Activated CD4-positive, alpha-beta memory T cell treated with anti-CD3 and anti-CD28 coated beads for 36 hours (primary cell): ENCODE measurements at regions of chr7 and their contacts with region 1.

Region 1: GRCh38 chr7:143008007-143008901 is 18.7 kb downstream of the OR9A2 start:
- DNase-seq: peak; percentile 88
- H3K4me3 Mint-ChIP-seq: no peak overlapping the region
- H3K27ac Mint-ChIP-seq: no peak overlapping the region
- H3K4me1 Mint-ChIP-seq: peaks cover 5% of the 10 kb centered on the region
- H3K27me3 Mint-ChIP-seq: peaks cover 5% of the 10 kb centered on the region

Region 2: GRCh38 chr7:142301923-142302550 is 706.2 kb before region 1 on chr7:
- CTCF ChIA-PET with region 1: interaction called, 14 read pairs
- POLR2A ChIA-PET with region 1: no interaction called
- intact Hi-C with region 1: loop called (anchors 5 kb)
- DNase-seq: no peak
- H3K4me3 Mint-ChIP-seq: no peak overlapping the region
- H3K27ac Mint-ChIP-seq: no peak overlapping the region
- H3K4me1 Mint-ChIP-seq: peaks cover 20% of the 10 kb centered on the region
- H3K27me3 Mint-ChIP-seq: peaks cover 10% of the 10 kb centered on the region

Region 3: GRCh38 chr7:142535123-142535779 is 473.0 kb before region 1 on chr7:
- CTCF ChIA-PET with region 1: interaction called, 32 read pairs
- POLR2A ChIA-PET with region 1: no interaction called
- intact Hi-C with region 1: loop called (anchors 1 kb)
- DNase-seq: peak; percentile 89
- H3K4me3 Mint-ChIP-seq: peak overlapping the region; percentile 67
- H3K27ac Mint-ChIP-seq: peak overlapping the region; percentile 86
- H3K4me1 Mint-ChIP-seq: peaks cover 32% of the 10 kb centered on the region
- H3K27me3 Mint-ChIP-seq: peaks cover 3% of the 10 kb centered on the region

Region 4: GRCh38 chr7:142873281-142873787 is 134.9 kb before region 1 on chr7:
- CTCF ChIA-PET with region 1: interaction called, 35 read pairs
- POLR2A ChIA-PET with region 1: no interaction called
- intact Hi-C with region 1: no loop called
- DNase-seq: peak; percentile 58
- H3K4me3 Mint-ChIP-seq: no peak overlapping the region
- H3K27ac Mint-ChIP-seq: no peak overlapping the region
- H3K4me1 Mint-ChIP-seq: no peaks in the 10 kb centered on the region
- H3K27me3 Mint-ChIP-seq: no peaks in the 10 kb centered on the region

Region 5: GRCh38 chr7:143214789-143215679 is 206.8 kb after region 1 on chr7:
- CTCF ChIA-PET with region 1: interaction called, 402 read pairs
- POLR2A ChIA-PET with region 1: interaction called, 4 read pairs
- intact Hi-C with region 1: loop called (anchors 1 kb)
- DNase-seq: peak; percentile 68
- H3K4me3 Mint-ChIP-seq: no peak overlapping the region
- H3K27ac Mint-ChIP-seq: no peak overlapping the region
- H3K4me1 Mint-ChIP-seq: no peaks in the 10 kb centered on the region
- H3K27me3 Mint-ChIP-seq: peaks cover 3% of the 10 kb centered on the region